ENCODE measurements at regions of chr7 and their contacts with region 1.

Region 1: GRCh38 chr7:29866490-29866930 is 60.2 kb downstream of the WIPF3 start:
- DNase-seq: no peak
- ATAC-seq: no peak
- H3K4me3 ChIP-seq: no peak overlapping the region
- H3K27ac ChIP-seq: no peak overlapping the region
- H3K4me1 ChIP-seq: peaks cover 5% of the 10 kb centered on the region; the same call in 1 of the 2 replicates
- H3K27me3 ChIP-seq: no peaks in the 10 kb centered on the region
- CTCF ChIP-seq: no peak

Region 2: DNA sequence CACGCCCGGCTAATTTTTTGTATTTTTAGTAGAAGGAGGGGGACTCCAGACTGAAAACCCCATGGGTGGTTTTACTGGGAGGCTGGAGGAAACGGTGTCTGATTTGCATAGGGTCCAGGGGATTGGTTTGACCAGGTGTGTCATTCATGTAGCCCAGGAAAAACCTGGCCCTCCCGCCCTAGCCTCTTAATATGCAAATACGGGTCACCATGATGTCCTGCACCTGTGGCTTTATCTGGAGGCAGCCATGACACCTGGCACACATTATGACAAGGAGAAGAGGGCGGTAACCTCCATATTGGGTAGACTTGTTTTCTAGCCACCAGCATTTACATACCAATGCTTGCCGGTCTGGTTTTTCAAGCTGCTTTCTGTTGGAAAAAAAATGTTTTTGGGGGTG is 976.4 kb before region 1 on chr7:
- CTCF ChIA-PET with region 1: no interaction called
- POLR2A ChIA-PET with region 1: no interaction called
- intact Hi-C with region 1: no loop called
- DNase-seq: no peak
- ATAC-seq: no peak
- H3K4me3 ChIP-seq: no peak overlapping the region
- H3K27ac ChIP-seq: no peak overlapping the region
- H3K4me1 ChIP-seq: no peaks in the 10 kb centered on the region
- H3K27me3 ChIP-seq: no peaks in the 10 kb centered on the region
- CTCF ChIP-seq: no peak

Region 3: DNA sequence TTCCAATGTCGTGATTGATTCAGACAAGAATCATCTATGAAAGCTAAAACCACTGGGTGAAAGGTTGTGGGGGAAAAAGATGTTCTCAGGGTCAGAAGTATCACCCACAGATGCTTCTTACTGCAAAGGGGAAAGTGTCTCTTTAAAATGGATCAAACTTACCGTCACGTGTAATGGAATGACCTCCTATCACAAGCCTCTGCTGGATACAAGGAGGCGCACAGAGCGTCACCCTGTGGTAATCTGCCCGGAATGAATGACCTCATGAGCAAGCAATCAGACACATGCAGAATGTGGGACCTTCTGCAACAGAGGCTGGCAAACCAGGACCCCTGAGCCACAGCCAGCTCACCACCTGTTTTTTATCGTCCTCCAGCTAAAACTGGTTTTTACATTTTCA is 27.2 kb before region 1 on chr7:
- CTCF ChIA-PET with region 1: no interaction called
- POLR2A ChIA-PET with region 1: no interaction called
- intact Hi-C with region 1: loop called (anchors 1 kb)
- DNase-seq: no peak
- ATAC-seq: no peak
- H3K4me3 ChIP-seq: no peak overlapping the region
- H3K27ac ChIP-seq: no peak overlapping the region
- H3K4me1 ChIP-seq: no peaks in the 10 kb centered on the region
- H3K27me3 ChIP-seq: no peaks in the 10 kb centered on the region
- CTCF ChIP-seq: no peak